Panc1 (cell line): ENCODE measurements at regions of chr4 and their contacts with region 1.

Region 1: DNA sequence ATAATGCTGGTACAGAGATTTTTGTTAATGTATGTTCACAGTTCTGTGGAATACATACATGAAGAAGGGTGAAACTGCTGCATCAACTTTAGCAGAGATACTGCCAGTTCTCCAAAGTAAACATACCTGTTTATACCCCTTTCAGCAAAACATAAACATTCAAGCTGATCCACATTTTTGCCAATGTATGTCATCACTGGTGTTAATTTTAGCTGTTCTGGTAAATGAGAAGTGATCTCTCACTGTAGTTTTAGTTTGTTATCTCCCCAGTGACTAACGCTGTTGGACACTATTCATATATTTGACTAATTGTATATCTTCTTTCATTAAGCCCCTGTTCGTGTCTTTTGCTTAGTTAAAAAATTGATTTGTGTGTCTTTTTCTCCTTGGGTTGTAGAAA is 82.0 kb downstream of the HAUS3 start:
- DNase-seq: no peak
- ATAC-seq: no peak
- H3K4me3 ChIP-seq: no peak overlapping the region
- H3K27ac ChIP-seq: no peak overlapping the region
- H3K4me1 ChIP-seq: no peaks in the 10 kb centered on the region
- H3K27me3 ChIP-seq: no peaks in the 10 kb centered on the region
- CTCF ChIP-seq: no peak

Region 2: GRCh38 chr4:1856042-1856788 is 303.7 kb before region 1 on chr4 and contains the start of gene LETM1:
- CTCF ChIA-PET with region 1: no interaction called
- POLR2A ChIA-PET with region 1: interaction called, 11 read pairs
- in situ Hi-C with region 1: no loop called
- intact Hi-C with region 1: no loop called
- DNase-seq: no peak
- ATAC-seq: peak; percentile 96
- H3K4me3 ChIP-seq: peak within 1 kb of the TSS; percentile 75 to 78
- H3K27ac ChIP-seq: peak within 1 kb of the TSS; percentile 83
- H3K4me1 ChIP-seq: peaks cover 15% of the 10 kb centered on the region
- H3K27me3 ChIP-seq: no peaks in the 10 kb centered on the region
- CTCF ChIP-seq: no peak
- total RNA-seq, gene LETM1: 67.6 TPM